GM10248 (cell line): ENCODE measurements at regions of chr14 and their contacts with region 1.

Region 1: DNA sequence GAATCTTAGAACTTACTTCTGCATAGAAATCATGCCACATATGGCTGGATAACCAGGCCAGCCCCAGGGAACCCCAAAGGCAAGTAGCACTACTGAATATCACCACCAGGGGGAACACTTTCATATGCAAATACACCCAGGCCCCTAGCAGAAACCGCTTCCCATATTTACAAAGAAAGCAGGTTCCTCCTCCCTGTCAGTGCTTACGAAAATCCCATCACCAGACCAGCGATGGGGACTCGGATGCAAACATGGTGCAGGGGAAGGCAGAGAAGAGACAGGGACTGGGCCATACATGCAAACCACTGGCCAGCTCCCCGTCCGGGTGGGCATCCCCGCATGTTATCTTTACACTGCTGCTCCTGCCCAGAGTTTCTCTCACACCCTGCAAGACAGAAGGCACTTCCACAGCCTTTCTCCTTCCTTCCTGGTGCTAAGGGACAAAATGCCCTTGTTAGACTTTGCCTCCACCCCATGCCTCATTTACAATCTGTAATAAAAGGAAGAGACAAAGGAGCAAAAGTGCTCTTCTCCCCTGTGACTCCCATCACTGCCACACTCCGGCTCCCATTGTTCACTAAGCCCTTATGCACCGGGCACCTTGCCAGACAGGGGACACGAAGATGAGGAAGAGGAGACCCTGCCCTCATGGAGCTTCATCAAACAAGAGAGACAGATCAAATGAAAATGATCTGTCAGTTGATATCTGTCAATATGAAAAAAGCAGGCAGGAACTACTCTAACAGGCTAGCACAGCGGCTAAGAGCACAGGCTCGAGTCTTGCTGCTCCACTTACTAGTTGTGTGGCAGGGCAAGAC is 62.3 kb downstream of the PTPN21 start:
- DNase-seq: peak; percentile 77
- CTCF ChIP-seq: peak; percentile 65

Region 2: DNA sequence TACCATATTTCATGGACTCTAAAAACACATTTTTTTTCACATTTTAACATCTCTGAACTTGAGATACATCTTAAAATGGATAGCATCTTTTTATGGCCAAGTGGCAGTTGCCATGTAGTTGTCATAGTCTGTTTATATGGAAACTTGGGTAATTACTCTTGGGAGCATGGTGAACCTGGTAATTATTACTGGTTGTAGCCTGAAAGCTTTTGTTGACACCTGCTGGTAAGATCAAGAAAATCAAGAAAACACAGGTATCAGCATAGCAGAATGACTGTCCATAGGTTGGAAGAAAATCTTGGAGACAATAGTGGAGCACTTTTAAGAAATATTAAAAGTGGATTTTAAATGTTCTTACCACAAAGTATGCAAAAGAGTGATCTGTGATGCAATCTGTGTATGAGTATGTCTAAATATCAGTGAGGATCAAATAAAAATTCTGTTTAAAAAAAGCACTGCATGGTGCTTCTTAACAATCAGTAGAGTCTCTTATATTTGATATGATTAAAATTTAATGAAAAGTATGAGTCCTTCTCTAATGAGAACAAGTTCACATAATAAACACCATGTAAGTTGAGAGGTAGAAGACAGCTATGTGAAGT is 376.2 kb after region 1 on chr14:
- CTCF ChIA-PET with region 1: interaction called, 13 read pairs
- POLR2A ChIA-PET with region 1: no interaction called
- DNase-seq: peak; percentile 6
- CTCF ChIP-seq: peak; percentile 35